Heart left ventricle (tissue), 16 donors: ENCODE measurements at regions of chr1 and their contacts with region 1.

Region 1: DNA sequence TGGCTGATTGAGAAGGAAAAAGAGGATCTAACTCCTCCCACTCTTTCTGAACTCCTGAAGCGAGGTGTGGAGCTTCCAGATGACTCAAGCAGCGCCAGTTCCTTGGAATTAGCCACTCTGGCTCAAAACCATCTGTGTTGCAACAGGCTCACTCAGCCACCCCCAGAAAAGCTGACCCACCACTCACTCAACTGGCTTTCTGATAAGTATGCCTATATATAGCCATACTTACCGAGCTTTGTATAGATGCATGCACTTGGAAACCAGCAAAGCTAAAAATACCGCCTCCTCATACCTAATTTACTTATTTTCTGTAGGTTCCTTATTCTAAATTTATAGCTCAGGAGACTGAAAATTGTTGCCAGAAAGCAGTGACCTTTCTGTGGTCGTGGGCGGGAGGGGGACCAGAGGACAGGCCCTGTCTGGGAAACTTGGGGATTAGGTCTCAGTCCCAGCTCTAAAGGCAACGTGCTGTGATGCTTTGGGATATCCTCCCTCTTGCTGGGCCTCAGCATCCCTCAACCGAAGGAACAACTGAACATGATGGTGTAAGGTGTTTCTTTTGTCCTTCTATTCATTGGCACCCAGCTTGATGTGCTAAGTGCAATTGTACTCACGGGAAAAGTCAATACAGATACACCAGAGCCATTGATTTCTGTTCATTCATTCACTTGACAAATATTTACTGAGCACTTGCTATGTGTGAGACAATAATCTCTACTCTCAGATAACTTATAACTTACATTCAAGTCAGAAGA is 65.7 kb downstream of the NENF start:
- DNase-seq: no peak
- ATAC-seq: no peak
- H3K4me3 ChIP-seq: no peak overlapping the region
- H3K27ac ChIP-seq: no peak overlapping the region
- H3K4me1 ChIP-seq: peaks cover 0 to 14% (median 0%) of the 10 kb centered on the region in 12 donors
- H3K27me3 ChIP-seq: no peaks in the 10 kb centered on the region
- CTCF ChIP-seq: no peak
- POLR2A ChIP-seq: no peak

Region 2: GRCh38 chr1:212247179-212247721 is 251.2 kb before region 1 on chr1:
- intact Hi-C with region 1: no loop called
- DNase-seq: no peak
- ATAC-seq: peak in 3 of 4 donors; percentile 41 to 49 (median 48)
- H3K4me3 ChIP-seq: peak overlapping the region in 3 of 12 donors; percentile 3 to 30 (median 10)
- H3K27ac ChIP-seq: peak overlapping the region in 10 of 12 donors; percentile 8 to 64 (median 36)
- H3K4me1 ChIP-seq: peaks cover 0 to 31% (median 16%) of the 10 kb centered on the region in 12 donors
- H3K27me3 ChIP-seq: no peaks in the 10 kb centered on the region
- CTCF ChIP-seq: no peak
- POLR2A ChIP-seq: no peak

Region 3: DNA sequence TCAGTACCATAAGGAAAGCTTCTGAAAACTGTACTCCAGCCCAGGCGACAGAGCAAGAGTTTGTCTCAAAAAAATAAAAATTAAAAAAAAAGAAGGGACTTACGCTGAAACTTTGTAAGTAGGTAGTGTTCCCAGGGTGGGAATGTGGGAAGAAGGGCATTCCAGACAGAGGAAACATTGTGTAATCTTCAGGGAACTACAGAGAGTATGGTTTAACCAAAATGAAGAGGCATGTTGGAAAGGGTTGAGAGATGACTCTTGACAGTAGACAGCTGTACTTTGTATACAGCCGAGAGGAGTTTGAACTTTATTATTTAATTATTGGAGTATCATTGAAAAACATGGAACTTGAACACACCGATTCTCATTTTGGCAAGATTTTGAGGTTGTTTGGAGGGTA is 170.2 kb before region 1 on chr1:
- intact Hi-C with region 1: no loop called
- DNase-seq: no peak
- ATAC-seq: peak in 1 of 4 donors; percentile 69
- H3K4me3 ChIP-seq: no peak overlapping the region
- H3K27ac ChIP-seq: no peak overlapping the region
- H3K4me1 ChIP-seq: peaks cover 0 to 23% (median 6%) of the 10 kb centered on the region in 12 donors
- H3K27me3 ChIP-seq: no peaks in the 10 kb centered on the region
- CTCF ChIP-seq: no peak
- POLR2A ChIP-seq: no peak

Region 4: GRCh38 chr1:212621951-212622305 is 123.5 kb after region 1 on chr1:
- intact Hi-C with region 1: loop called in 1 of 10 experiments (anchors 5 kb)
- DNase-seq: no peak
- ATAC-seq: peak in 1 of 4 donors; percentile 10
- H3K4me3 ChIP-seq: no peak overlapping the region
- H3K27ac ChIP-seq: no peak overlapping the region
- H3K4me1 ChIP-seq: peaks cover 0 to 11% (median 0%) of the 10 kb centered on the region in 12 donors
- H3K27me3 ChIP-seq: no peaks in the 10 kb centered on the region
- CTCF ChIP-seq: no peak
- POLR2A ChIP-seq: no peak

Region 5: GRCh38 chr1:212635141-212635631 is 136.7 kb after region 1 on chr1:
- intact Hi-C with region 1: no loop called
- DNase-seq: no peak
- ATAC-seq: no peak
- H3K4me3 ChIP-seq: no peak overlapping the region
- H3K27ac ChIP-seq: peak overlapping the region in 11 of 12 donors; percentile 48 to 95 (median 75)
- H3K4me1 ChIP-seq: peaks cover 3 to 64% (median 42%) of the 10 kb centered on the region in 12 donors
- H3K27me3 ChIP-seq: no peaks in the 10 kb centered on the region
- CTCF ChIP-seq: no peak
- POLR2A ChIP-seq: no peak